OCI-LY7 (cell line): ENCODE measurements at regions of chr11 and their contacts with region 1.

Region 1: GRCh38 chr11:86218125-86219084 is 26.1 kb upstream of the EED start:
- DNase-seq: peak; percentile 67
- H3K4me3 ChIP-seq: no peak overlapping the region
- H3K27ac ChIP-seq: no peak overlapping the region
- H3K4me1 ChIP-seq: peaks cover 9% of the 10 kb centered on the region
- CTCF ChIP-seq: peak; percentile 89

Region 2: GRCh38 chr11:85941380-85941973 is 276.9 kb before region 1 on chr11:
- CTCF ChIA-PET with region 1: no interaction called
- POLR2A ChIA-PET with region 1: no interaction called
- intact Hi-C with region 1: loop called (anchors 10 kb)
- DNase-seq: peak; percentile 44
- H3K4me3 ChIP-seq: no peak overlapping the region
- H3K27ac ChIP-seq: no peak overlapping the region
- H3K4me1 ChIP-seq: no peaks in the 10 kb centered on the region
- CTCF ChIP-seq: peak; percentile 73

Region 3: DNA sequence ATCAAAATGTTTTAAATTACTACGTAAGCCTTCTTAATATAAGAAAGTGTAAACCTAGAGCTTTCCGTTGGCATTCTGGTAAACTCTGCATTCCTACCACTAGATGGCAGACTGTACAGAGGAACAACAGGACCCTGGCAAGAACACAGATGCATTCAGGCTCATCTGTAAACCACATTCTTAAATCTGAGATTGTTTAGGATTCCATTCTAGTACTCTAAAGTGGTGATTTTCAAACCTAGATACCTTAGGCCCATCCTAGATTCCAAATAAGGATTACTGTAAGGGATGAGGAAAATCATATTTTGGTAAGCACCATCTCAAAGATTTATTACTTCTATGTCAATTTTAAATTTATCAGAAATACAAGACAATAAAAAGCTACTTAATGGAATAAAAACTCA is 176.4 kb before region 1 on chr11:
- CTCF ChIA-PET with region 1: no interaction called
- POLR2A ChIA-PET with region 1: interaction called, 3 read pairs
- intact Hi-C with region 1: loop called (anchors 2 kb)
- DNase-seq: peak; percentile 79
- H3K4me3 ChIP-seq: no peak overlapping the region
- H3K27ac ChIP-seq: no peak overlapping the region
- H3K4me1 ChIP-seq: peaks cover 37% of the 10 kb centered on the region
- CTCF ChIP-seq: peak; percentile 99

Region 4: GRCh38 chr11:86234831-86235461 is 16.5 kb after region 1 on chr11:
- CTCF ChIA-PET with region 1: no interaction called
- POLR2A ChIA-PET with region 1: interaction called, 5 read pairs
- intact Hi-C with region 1: loop called (anchors 1 kb)
- DNase-seq: no peak
- H3K4me3 ChIP-seq: no peak overlapping the region
- H3K27ac ChIP-seq: no peak overlapping the region
- H3K4me1 ChIP-seq: no peaks in the 10 kb centered on the region
- CTCF ChIP-seq: no peak